GM12878 (cell line): ENCODE measurements at regions of chr6 and their contacts with region 1.

Region 1: DNA sequence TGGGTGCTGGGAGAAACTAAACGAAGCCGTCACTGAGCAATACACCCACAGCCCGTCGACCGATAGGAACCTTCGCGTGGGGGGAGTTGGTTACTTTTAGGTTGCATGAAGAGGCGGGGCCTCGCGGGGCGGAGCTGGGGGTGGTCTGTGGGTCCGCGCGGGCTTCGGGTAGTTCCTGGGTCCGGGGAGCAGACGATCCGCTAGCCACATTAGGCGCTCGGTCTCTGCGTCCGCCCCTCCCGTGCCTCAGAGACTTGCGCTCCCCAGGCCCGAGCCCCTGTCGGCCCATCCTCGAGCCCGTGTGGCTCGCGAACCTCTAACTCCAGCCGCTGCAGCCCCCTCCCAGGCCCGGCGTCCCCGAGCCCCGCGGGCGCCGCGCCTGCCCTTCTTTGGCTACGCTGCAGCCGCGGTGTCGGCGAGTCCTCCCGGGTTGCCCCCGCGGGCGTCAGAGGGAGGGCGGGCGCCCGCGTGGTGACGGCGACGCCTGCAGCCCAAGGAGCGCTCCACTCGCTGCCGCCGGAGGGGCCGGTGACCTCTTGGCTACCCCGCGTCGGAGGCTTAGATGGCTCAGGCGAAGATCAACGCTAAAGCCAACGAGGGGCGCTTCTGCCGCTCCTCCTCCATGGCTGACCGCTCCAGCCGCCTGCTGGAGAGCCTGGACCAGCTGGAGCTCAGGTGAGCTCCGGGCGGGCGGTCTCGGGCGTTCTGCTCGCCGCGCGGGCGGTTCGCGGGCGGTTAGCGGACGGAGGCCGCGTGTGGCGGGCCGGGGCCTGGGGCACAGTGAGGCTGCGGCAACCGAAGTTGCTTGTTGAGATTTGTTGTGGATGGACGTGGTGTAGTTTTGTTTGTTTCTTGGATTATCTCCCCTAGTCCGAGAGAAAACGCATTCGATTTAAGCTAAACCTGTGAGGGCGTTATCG is at the start of gene BAG2:
- DNase-seq: peak; percentile 68
- ATAC-seq: peak; percentile 91
- H3K4me3 ChIP-seq: peak within 1 kb of the TSS; percentile 84
- H3K27ac ChIP-seq: peak within 1 kb of the TSS; percentile 86
- H3K4me1 ChIP-seq: no peaks in the 10 kb centered on the region
- H3K27me3 ChIP-seq: no peaks in the 10 kb centered on the region
- CTCF ChIP-seq: 0 out of 6 replicates have a peak, but pooled peaks have one; percentile 10 to 19 (median 18)
- EP300 ChIP-seq: no peak
- POLR2A ChIP-seq: peak; percentile 95
- RAD21 ChIP-seq: no peak
- polyA plus RNA-seq, gene BAG2: 8.9 to 10.8 TPM

Region 2: GRCh38 chr6:56875961-56876360 is 296.4 kb before region 1 on chr6:
- CTCF ChIA-PET with region 1: no interaction called
- POLR2A ChIA-PET with region 1: no interaction called
- RAD21 ChIA-PET with region 1: no interaction called
- SMC1A ChIA-PET with region 1: no interaction called
- in situ Hi-C with region 1: no loop called
- intact Hi-C with region 1: no loop called
- DNase-seq: no peak
- ATAC-seq: no peak
- H3K4me3 ChIP-seq: no peak overlapping the region
- H3K27ac ChIP-seq: no peak overlapping the region
- H3K4me1 ChIP-seq: no peaks in the 10 kb centered on the region
- H3K27me3 ChIP-seq: no peaks in the 10 kb centered on the region
- CTCF ChIP-seq: no peak
- EP300 ChIP-seq: no peak
- POLR2A ChIP-seq: no peak
- RAD21 ChIP-seq: no peak

Region 3: GRCh38 chr6:57089687-57090460 is 82.5 kb before region 1 on chr6 and contains the start of gene ZNF451:
- CTCF ChIA-PET with region 1: interaction called, 3 read pairs
- POLR2A ChIA-PET with region 1: interaction called, 3 read pairs
- RAD21 ChIA-PET with region 1: interaction called, 3 read pairs
- SMC1A ChIA-PET with region 1: interaction called, 6 read pairs
- in situ Hi-C with region 1: no loop called
- intact Hi-C with region 1: loop called (anchors 2 kb)
- DNase-seq: peak; percentile 80
- ATAC-seq: peak; percentile 94
- H3K4me3 ChIP-seq: peak within 1 kb of the TSS; percentile 66
- H3K27ac ChIP-seq: peak within 1 kb of the TSS; percentile 71
- H3K4me1 ChIP-seq: peaks cover 8% of the 10 kb centered on the region
- H3K27me3 ChIP-seq: no peaks in the 10 kb centered on the region
- CTCF ChIP-seq: no peak
- EP300 ChIP-seq: no peak
- POLR2A ChIP-seq: peak; percentile 87
- RAD21 ChIP-seq: no peak
- polyA plus RNA-seq, gene ZNF451: 6.5 to 11.6 TPM

Region 4: GRCh38 chr6:57108691-57109090 is 63.7 kb before region 1 on chr6:
- CTCF ChIA-PET with region 1: no interaction called
- POLR2A ChIA-PET with region 1: interaction called, 3 read pairs
- RAD21 ChIA-PET with region 1: interaction called, 3 read pairs
- SMC1A ChIA-PET with region 1: no interaction called
- in situ Hi-C with region 1: no loop called
- intact Hi-C with region 1: loop called (anchors 5 kb)
- DNase-seq: peak; percentile 38
- ATAC-seq: peak; percentile 97
- H3K4me3 ChIP-seq: no peak overlapping the region
- H3K27ac ChIP-seq: peak overlapping the region; percentile 17; the same call in 1 of the 2 replicates
- H3K4me1 ChIP-seq: peaks cover 13% of the 10 kb centered on the region
- H3K27me3 ChIP-seq: no peaks in the 10 kb centered on the region
- CTCF ChIP-seq: no peak
- EP300 ChIP-seq: peak in 1 of 2 experiments; percentile 68; a peak in 1 of 4 replicates
- POLR2A ChIP-seq: no peak
- RAD21 ChIP-seq: peak; percentile 19; the same call in 1 of the 2 replicates

Region 5: GRCh38 chr6:57221936-57222742 is 49.7 kb after region 1 on chr6 and contains the start of gene RAB23:
- CTCF ChIA-PET with region 1: interaction called, 3 read pairs
- POLR2A ChIA-PET with region 1: interaction called, 5 read pairs
- RAD21 ChIA-PET with region 1: interaction called, 7 read pairs
- SMC1A ChIA-PET with region 1: interaction called, 4 read pairs
- in situ Hi-C with region 1: no loop called
- intact Hi-C with region 1: loop called (anchors 2 kb)
- DNase-seq: peak; percentile 58
- ATAC-seq: peak; percentile 91
- H3K4me3 ChIP-seq: peak within 1 kb of the TSS; percentile 81
- H3K27ac ChIP-seq: peak within 1 kb of the TSS; percentile 6
- H3K4me1 ChIP-seq: no peaks in the 10 kb centered on the region
- H3K27me3 ChIP-seq: no peaks in the 10 kb centered on the region
- CTCF ChIP-seq: no peak; a peak in 1 of 6 replicates
- EP300 ChIP-seq: no peak
- POLR2A ChIP-seq: peak; percentile 79
- RAD21 ChIP-seq: no peak
- polyA plus RNA-seq, gene RAB23: 0.80 to 1.3 TPM

Region 6: DNA sequence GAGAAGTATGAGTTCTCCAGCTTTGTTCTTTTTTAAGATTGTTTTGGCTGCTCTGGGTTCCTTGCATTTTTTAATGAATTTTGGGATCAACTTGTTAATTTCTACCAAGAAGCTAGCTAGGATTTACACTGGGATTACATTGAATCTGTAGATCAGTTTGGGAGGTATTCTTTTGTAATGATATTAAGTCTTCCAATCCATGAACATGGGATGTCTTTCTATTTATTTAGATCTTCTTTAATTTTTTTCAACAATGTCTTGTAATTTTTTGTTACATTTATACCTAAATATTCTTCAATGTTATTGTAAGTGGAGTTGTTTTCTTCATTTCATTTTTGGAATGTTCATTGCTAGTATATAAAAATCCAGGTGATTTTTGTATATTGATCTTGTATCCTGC is 157.5 kb after region 1 on chr6:
- CTCF ChIA-PET with region 1: no interaction called
- POLR2A ChIA-PET with region 1: no interaction called
- RAD21 ChIA-PET with region 1: no interaction called
- SMC1A ChIA-PET with region 1: no interaction called
- in situ Hi-C with region 1: no loop called
- intact Hi-C with region 1: no loop called
- DNase-seq: no peak
- ATAC-seq: no peak
- H3K4me3 ChIP-seq: no peak overlapping the region
- H3K27ac ChIP-seq: no peak overlapping the region
- H3K4me1 ChIP-seq: no peaks in the 10 kb centered on the region
- H3K27me3 ChIP-seq: no peaks in the 10 kb centered on the region
- CTCF ChIP-seq: no peak
- EP300 ChIP-seq: no peak
- POLR2A ChIP-seq: no peak
- RAD21 ChIP-seq: no peak